Colonic mucosa (tissue), 4 donors: ENCODE measurements at regions of chr4 and their contacts with region 1.

Region 1: DNA sequence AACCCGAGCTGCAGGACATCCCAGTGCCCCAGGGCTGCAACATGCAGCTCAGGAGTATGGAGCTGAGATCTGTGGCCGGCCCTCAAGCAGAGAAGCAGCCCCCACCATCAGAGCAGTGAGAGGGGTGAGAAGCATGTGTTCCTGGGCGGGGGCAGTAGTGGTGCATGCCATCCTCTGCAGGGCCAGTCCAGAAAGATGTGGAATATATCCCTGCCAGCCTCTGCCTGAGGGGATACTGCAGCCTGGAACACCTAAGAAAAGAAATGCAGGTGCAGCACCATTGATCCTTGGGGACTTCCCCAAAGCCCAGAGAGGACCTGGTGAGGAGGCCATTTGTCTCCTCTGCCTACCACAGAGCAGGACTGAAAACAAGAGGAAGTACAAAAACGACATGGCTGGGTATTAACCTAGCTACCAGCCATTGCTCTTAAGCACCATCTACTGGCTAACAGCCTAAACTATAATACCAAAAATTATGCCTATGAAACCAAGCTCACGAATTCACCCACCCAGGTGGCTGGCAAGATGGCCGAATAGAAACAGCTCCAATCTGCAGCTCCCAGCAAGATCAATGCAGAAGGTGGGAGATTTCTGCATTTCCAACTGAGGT is 158.8 kb downstream of the ADGRA3 start:
- DNase-seq: no peak
- H3K4me3 ChIP-seq: no peak overlapping the region
- H3K27ac ChIP-seq: no peak overlapping the region
- H3K4me1 ChIP-seq: no peaks in the 10 kb centered on the region
- H3K27me3 ChIP-seq: no peaks in the 10 kb centered on the region
- CTCF ChIP-seq: peak; percentile 28

Region 2: DNA sequence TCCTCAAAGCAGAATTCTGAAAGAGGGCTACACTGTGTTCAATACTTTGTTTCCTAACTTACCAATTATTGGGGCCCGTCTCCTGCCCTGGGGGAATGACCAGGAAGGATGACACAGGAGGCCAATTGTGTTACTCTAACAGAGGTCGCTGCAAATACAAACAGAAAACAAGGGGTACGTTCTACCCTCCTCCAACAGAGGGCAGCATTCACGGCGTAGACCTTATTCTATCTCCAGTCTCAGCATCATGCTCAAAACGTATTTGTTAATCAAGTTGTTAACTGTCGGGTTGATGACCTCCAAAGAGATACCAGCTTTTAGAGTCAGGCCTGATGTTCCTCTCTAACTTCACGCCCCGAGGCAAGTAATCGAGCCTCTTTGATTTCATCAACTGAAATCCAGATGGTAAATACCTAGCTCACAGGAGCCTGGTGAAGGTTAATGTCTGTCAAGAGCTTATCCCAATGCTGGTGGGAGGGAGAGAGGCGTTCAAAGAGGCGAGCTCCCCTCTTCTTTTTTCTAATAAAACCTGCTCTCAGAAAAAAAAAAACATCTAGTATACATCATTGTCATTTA is 227.6 kb before region 1 on chr4:
- intact Hi-C with region 1: loop called (anchors 10 kb)
- DNase-seq: peak; percentile 25
- H3K4me3 ChIP-seq: no peak overlapping the region
- H3K27ac ChIP-seq: no peak overlapping the region
- H3K4me1 ChIP-seq: no peaks in the 10 kb centered on the region
- H3K27me3 ChIP-seq: no peaks in the 10 kb centered on the region
- CTCF ChIP-seq: peak; percentile 21